Activated CD8-positive, alpha-beta T cell treated with anti-CD3 and anti-CD28 coated beads, Interleukin-2, amount 10 ng/mL, durations not matched to agents 7 days and 5 days (primary cell): ENCODE measurements at regions of chr6 and their contacts with region 1.

Region 1: DNA sequence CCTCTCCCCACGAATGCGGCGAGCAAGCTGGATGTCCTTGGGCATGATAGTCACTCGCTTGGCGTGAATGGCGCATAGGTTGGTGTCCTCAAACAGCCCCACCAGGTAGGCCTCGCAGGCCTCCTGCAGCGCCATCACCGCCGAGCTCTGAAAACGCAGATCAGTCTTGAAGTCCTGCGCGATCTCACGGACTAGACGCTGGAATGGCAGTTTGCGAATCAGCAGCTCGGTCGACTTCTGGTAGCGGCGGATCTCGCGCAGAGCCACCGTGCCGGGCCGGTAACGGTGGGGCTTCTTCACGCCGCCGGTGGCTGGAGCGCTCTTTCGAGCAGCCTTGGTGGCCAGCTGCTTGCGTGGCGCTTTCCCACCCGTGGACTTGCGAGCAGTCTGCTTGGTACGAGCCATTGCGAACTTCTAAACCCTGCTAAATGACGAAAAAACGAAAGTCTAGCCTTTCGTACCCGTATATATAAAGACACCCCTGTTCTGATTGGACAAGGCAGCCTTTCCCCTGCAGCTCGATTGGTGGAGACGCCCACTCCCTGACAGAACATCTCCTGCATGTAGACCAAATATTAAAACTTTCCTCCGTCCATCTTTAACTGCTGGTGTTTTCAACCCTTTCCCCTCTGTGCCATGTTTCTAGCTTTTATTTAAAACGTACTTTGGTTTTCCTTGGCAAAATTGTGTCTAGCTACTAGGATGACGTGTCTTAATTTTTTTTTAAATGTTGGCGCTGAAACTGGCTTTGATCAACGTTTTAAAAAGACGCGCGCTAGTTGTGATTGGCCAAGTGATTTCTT is 109.8 kb downstream of the HFE start:
- DNase-seq: peak; percentile 92
- ATAC-seq: peak; percentile 43
- H3K4me3 Mint-ChIP-seq: peak overlapping the region; percentile 99
- H3K27ac Mint-ChIP-seq: peak overlapping the region; percentile 93
- H3K4me1 Mint-ChIP-seq: peaks cover 50% of the 10 kb centered on the region
- H3K27me3 Mint-ChIP-seq: no peaks in the 10 kb centered on the region

Region 2: DNA sequence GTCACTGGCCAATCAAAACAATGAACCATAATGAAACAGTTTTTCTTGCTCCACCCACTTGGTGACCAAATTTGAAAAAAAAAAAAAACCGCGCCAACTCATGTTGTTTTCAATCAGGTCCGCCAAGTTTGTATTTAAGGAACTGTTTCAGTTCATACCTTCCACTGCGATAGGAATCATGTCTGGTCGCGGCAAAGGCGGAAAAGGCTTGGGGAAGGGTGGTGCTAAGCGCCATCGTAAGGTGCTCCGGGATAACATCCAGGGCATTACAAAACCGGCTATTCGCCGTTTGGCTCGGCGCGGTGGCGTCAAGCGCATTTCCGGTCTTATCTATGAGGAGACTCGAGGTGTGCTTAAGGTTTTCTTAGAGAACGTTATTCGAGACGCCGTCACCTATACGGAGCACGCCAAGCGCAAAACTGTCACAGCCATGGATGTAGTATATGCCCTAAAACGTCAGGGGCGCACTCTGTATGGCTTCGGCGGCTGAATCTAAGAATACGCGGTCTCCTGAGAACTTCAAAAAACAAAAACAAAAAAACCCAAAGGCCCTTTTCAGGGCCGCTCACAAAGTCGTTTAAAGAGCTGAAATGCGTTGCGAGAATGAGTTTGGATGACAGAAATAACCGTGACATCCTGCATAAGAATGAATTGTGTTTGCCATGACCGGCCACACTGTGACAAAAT is 93.1 kb before region 1 on chr6:
- CTCF ChIA-PET with region 1: no interaction called
- POLR2A ChIA-PET with region 1: interaction called, 47 read pairs
- DNase-seq: peak; percentile 93
- ATAC-seq: peak; percentile 89
- H3K4me3 Mint-ChIP-seq: peak overlapping the region; percentile 85
- H3K27ac Mint-ChIP-seq: peak overlapping the region; percentile 98
- H3K4me1 Mint-ChIP-seq: peaks cover 26% of the 10 kb centered on the region
- H3K27me3 Mint-ChIP-seq: peaks cover 2% of the 10 kb centered on the region

Region 3: DNA sequence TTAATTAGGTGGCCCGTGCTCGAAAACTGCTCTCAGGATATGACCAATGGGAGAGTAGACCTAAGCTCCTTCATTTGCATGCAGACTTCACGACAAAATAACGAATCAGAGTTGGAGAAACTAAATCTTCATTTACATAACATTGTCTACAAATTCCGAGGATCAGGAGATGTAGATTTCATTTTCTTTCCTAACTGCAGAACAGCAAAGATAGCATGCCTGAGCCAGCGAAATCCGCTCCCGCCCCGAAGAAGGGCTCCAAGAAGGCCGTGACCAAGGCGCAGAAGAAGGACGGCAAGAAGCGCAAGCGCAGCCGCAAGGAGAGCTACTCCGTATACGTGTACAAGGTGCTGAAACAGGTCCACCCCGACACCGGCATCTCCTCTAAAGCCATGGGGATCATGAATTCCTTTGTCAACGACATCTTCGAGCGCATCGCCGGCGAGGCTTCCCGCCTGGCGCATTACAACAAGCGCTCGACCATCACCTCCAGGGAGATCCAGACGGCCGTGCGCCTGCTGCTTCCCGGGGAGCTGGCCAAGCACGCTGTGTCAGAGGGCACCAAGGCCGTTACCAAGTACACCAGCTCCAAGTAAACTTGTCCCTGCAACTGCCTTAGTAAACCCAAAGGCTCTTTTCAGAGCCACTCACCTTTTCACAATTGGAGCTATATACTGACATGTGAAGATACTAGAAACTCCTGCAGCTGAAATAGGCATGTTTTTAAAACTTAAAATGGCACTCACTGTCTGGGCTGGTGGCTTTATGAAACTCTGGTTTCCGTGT is 13.3 kb before region 1 on chr6:
- CTCF ChIA-PET with region 1: interaction called, 16 read pairs
- POLR2A ChIA-PET with region 1: interaction called, 2,224 read pairs
- DNase-seq: peak; percentile 80
- ATAC-seq: peak; percentile 80
- H3K4me3 Mint-ChIP-seq: peak overlapping the region; percentile 83
- H3K27ac Mint-ChIP-seq: peak overlapping the region; percentile 97
- H3K4me1 Mint-ChIP-seq: peaks cover 79% of the 10 kb centered on the region
- H3K27me3 Mint-ChIP-seq: no peaks in the 10 kb centered on the region

Region 4: GRCh38 chr6:26383624-26384417 is 186.8 kb after region 1 on chr6:
- CTCF ChIA-PET with region 1: no interaction called
- POLR2A ChIA-PET with region 1: no interaction called
- DNase-seq: no peak
- ATAC-seq: peak; percentile 40
- H3K4me3 Mint-ChIP-seq: peak overlapping the region; percentile 95
- H3K27ac Mint-ChIP-seq: peak overlapping the region; percentile 91
- H3K4me1 Mint-ChIP-seq: peaks cover 23% of the 10 kb centered on the region
- H3K27me3 Mint-ChIP-seq: no peaks in the 10 kb centered on the region

Region 5: DNA sequence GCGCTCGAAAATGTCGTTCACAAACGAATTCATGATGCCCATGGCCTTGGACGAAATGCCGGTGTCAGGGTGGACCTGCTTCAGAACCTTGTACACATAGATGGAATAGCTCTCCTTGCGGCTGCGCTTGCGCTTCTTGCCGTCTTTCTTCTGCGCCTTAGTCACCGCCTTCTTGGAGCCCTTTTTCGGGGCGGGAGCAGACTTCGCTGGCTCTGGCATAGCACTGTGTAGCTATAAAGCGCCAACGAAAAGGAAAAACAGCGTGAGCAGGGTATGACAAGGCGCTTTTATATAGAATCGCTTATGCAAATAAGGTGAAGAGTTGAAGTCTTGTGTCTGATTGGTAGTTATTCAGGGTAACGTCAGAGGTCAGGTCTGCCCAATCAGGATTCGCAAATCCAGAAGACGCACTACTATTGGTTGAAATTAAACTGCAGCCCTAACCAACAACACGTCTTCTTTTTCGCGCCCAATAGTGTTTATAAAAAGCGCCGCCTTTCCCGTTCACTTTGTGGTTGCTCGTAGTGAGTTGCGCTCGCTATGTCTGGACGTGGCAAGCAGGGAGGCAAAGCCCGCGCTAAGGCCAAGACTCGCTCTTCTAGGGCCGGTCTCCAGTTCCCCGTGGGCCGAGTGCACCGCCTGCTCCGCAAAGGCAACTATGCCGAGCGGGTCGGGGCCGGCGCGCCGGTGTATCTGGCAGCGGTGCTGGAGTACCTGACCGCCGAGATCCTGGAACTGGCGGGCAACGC is 935.7 kb after region 1 on chr6:
- CTCF ChIA-PET with region 1: no interaction called
- POLR2A ChIA-PET with region 1: interaction called, 68 read pairs
- DNase-seq: peak; percentile 95
- ATAC-seq: peak; percentile 76
- H3K4me3 Mint-ChIP-seq: no peak overlapping the region
- H3K27ac Mint-ChIP-seq: no peak overlapping the region
- H3K4me1 Mint-ChIP-seq: peaks cover 68% of the 10 kb centered on the region
- H3K27me3 Mint-ChIP-seq: no peaks in the 10 kb centered on the region

Region 6: DNA sequence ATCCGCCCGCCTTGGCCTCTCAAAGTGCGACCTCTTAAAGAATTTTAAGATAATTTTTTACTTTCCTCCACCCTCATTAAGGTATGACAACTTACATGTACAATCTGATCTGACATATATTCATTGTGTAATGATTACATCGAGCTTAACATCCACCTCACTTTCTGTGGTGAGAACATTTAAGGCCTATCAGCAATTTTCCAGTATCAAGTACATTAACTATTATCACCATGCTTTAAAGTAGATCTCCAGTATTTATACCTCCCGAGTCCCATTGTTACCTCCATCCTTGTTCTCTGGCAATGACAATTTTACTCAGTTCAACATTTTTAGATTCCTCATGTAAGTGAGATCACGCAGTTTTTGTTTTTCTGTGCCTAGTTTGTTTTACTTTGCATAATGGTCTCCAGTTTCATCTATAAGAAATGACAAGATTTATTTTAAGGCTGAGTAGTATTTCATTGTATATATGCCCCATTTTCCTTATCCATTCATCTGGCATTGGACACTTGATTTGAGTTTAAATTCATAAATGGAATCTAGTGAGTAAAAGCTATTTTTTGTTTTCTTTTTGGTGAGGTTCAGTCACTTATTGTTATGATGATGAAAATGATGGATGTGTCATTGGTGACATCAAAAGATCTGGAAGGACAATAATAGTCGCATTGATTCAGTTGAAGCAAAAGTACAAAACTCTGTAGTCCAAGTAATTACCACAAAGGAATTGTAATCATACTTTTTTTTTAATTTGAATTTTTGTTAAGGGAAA is 1628.2 kb after region 1 on chr6:
- CTCF ChIA-PET with region 1: no interaction called
- POLR2A ChIA-PET with region 1: interaction called, 28 read pairs
- DNase-seq: no peak
- ATAC-seq: peak; percentile 3
- H3K4me3 Mint-ChIP-seq: peak overlapping the region; percentile 93
- H3K27ac Mint-ChIP-seq: peak overlapping the region; percentile 99
- H3K4me1 Mint-ChIP-seq: peaks cover 45% of the 10 kb centered on the region
- H3K27me3 Mint-ChIP-seq: no peaks in the 10 kb centered on the region